ENCODE measurements at regions of chr9 and their contacts with region 1.

Region 1: GRCh38 chr9:81689343-81690190 is at the start of gene TLE1:
- DNase-seq: peak; percentile 98 to 100
- H3K4me3 ChIP-seq: peak within 1 kb of the TSS; percentile 84
- H3K27ac ChIP-seq: peak within 1 kb of the TSS; percentile 91
- H3K4me1 ChIP-seq: peaks cover 34% of the 10 kb centered on the region
- H3K27me3 ChIP-seq: no peaks in the 10 kb centered on the region
- CTCF ChIP-seq: no peak
- total RNA-seq, gene TLE1: 69.9 and 80.9 TPM in 2 replicates

Region 2: DNA sequence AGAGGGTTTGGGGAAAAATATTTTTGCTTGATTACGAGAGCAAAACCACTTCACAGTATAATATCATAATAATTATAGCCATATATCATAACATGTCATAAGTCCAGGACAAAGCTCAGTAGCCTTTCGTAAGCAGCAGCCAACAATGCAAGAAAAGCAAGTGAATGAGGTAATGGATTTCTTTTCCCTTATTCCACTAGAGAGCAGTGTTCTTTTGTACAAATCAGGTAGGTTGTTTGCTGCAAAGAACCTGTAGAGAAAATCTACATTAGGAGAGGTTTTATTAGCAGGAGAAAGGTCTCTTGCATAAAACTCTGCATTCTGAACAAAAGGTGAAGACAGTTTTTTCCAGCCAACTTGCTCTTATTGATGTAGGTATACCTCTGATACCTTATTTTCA is 1084.4 kb before region 1 on chr9:
- CTCF ChIA-PET with region 1: no interaction called
- POLR2A ChIA-PET with region 1: no interaction called
- intact Hi-C with region 1: loop called (anchors 10 kb)
- DNase-seq: peak in 1 of 2 experiments; percentile 37
- H3K4me3 ChIP-seq: no peak overlapping the region
- H3K27ac ChIP-seq: no peak overlapping the region
- H3K4me1 ChIP-seq: no peaks in the 10 kb centered on the region
- H3K27me3 ChIP-seq: no peaks in the 10 kb centered on the region
- CTCF ChIP-seq: peak; percentile 47; the same call in 1 of the 2 replicates

Region 3: GRCh38 chr9:81521892-81522291 is 167.7 kb before region 1 on chr9:
- CTCF ChIA-PET with region 1: no interaction called
- POLR2A ChIA-PET with region 1: no interaction called
- intact Hi-C with region 1: loop called (anchors 2 kb)
- DNase-seq: peak in 1 of 2 experiments; percentile 56
- H3K4me3 ChIP-seq: no peak overlapping the region
- H3K27ac ChIP-seq: no peak overlapping the region
- H3K4me1 ChIP-seq: peaks cover 13% of the 10 kb centered on the region; the same call in 1 of the 2 replicates
- H3K27me3 ChIP-seq: no peaks in the 10 kb centered on the region
- CTCF ChIP-seq: no peak

Region 4: DNA sequence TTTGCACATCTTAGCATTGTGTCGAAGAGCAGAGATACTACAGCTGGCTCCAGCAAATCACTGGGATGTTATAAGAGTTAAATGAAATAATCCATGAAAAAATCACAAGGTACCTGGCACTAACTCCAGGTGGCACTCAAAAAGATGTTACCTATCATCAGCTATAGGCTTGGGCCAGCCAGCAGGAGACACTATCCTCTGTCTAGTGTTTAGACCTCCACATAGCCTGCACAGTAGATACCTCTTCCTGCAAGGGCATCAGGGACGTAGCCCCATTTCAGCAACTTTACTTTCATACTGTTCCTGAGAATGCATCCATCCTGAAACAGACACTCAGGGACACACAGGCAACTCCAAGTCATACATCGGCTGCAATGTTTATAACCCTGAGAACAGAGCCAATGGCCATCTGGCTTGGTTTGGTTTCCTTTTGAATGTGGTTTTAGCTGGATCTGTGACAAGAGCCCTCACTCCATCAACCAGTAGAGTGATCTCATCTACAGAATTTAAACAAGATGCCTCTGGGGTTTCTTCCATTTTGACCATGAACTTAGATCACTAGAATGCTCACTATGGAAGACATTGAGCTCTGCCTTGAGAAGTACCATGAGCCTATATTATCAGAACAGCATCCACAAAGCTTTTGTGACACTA is 70.1 kb before region 1 on chr9:
- CTCF ChIA-PET with region 1: no interaction called
- POLR2A ChIA-PET with region 1: no interaction called
- intact Hi-C with region 1: no loop called
- DNase-seq: no peak
- H3K4me3 ChIP-seq: no peak overlapping the region
- H3K27ac ChIP-seq: no peak overlapping the region
- H3K4me1 ChIP-seq: no peaks in the 10 kb centered on the region
- H3K27me3 ChIP-seq: no peaks in the 10 kb centered on the region
- CTCF ChIP-seq: no peak

Region 5: GRCh38 chr9:81737853-81738507 is 48.4 kb after region 1 on chr9:
- CTCF ChIA-PET with region 1: no interaction called
- POLR2A ChIA-PET with region 1: interaction called, 3 read pairs
- intact Hi-C with region 1: loop called (anchors 1 kb)
- DNase-seq: peak; percentile 76 to 97
- H3K4me3 ChIP-seq: no peak overlapping the region
- H3K27ac ChIP-seq: peak overlapping the region; percentile 97
- H3K4me1 ChIP-seq: peaks cover 39% of the 10 kb centered on the region
- H3K27me3 ChIP-seq: no peaks in the 10 kb centered on the region
- CTCF ChIP-seq: no peak

Region 6: GRCh38 chr9:82332018-82332773 is 642.6 kb after region 1 on chr9:
- CTCF ChIA-PET with region 1: no interaction called
- POLR2A ChIA-PET with region 1: no interaction called
- intact Hi-C with region 1: loop called (anchors 10 kb)
- DNase-seq: peak; percentile 49 to 74
- H3K4me3 ChIP-seq: peak overlapping the region; percentile 4; the same call in 1 of the 2 replicates
- H3K27ac ChIP-seq: peak overlapping the region; percentile 40
- H3K4me1 ChIP-seq: peaks cover 20% of the 10 kb centered on the region
- H3K27me3 ChIP-seq: no peaks in the 10 kb centered on the region
- CTCF ChIP-seq: no peak